ENCODE measurements at regions of chr7 and their contacts with region 1.

Region 1: GRCh38 chr7:38369816-38370493 is 96.5 kb upstream of the TARP start:
- DNase-seq: peak; percentile 66
- H3K4me3 Mint-ChIP-seq: no peak overlapping the region
- H3K27ac Mint-ChIP-seq: peak overlapping the region; percentile 61
- H3K4me1 Mint-ChIP-seq: peaks cover 38% of the 10 kb centered on the region
- H3K27me3 Mint-ChIP-seq: no peaks in the 10 kb centered on the region

Region 2: DNA sequence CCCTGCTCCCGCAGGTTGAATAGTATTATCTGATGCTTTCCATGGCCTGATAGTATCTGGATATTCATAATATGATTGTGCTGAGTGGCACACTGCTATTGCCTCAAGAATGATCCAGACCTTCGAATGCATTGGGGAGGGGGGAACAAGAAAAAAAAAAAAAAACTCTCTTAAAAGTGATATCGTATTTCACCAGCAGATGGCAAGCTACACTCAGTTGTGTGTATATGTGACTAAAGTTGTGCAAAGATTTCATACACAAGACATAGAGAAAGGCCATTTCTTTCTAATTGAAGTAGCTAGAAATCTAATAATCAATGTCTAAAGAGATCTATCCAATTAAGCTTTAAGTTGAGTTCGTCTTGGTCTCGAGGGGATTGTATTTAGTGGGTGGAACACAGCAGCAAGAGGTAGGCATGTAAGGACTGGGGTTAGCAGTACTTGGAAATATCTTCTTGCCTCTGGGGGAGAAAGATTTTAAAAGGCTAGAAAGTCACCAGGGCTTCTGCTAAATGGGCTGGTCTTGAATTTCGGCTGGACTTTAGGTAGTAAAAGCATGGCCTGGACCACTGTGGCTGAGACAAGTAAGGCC is 468.6 kb before region 1 on chr7:
- intact Hi-C with region 1: loop called (anchors 5 kb)
- DNase-seq: no peak
- H3K4me3 Mint-ChIP-seq: no peak overlapping the region
- H3K27ac Mint-ChIP-seq: no peak overlapping the region
- H3K4me1 Mint-ChIP-seq: no peaks in the 10 kb centered on the region
- H3K27me3 Mint-ChIP-seq: peaks cover 2% of the 10 kb centered on the region

Region 3: DNA sequence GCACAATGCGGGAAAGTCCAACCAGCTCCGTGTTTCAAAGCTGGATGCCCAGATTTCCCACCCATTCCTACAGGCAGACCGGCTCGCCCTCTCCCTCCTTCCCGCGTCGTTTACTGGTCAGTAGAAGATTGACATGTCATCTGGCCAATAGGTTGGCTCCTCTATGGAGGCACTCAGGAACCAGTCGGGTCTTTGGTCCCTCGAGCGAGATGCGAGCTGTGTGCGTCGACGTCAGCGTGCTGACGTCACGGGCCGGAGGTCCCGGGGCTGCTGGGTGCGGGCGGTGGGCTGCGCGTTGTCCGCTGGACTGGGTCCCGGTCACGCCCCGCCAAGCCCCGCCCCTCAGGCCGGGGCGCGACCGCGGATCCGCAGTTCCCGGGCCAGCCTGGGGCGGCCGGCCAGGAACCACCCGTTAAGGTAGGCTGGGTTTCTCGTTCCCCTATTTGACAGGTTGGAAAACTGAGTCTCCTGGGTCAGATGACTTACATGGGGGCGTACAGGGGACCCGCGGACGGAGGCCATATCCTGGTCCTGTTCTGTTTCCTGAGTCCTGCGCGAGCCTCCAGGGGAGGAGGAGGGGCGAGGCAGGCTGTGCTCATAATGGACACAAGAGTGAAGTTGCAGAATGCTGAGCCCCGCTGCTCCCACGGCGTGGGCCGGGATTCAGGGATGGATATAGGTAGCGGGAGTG is 191.8 kb before region 1 on chr7 and contains the start of gene STARD3NL:
- intact Hi-C with region 1: loop called (anchors 2 kb)
- DNase-seq: peak; percentile 87
- H3K4me3 Mint-ChIP-seq: peak within 1 kb of the TSS; percentile 95
- H3K27ac Mint-ChIP-seq: peak within 1 kb of the TSS; percentile 89
- H3K4me1 Mint-ChIP-seq: peaks cover 36% of the 10 kb centered on the region
- H3K27me3 Mint-ChIP-seq: no peaks in the 10 kb centered on the region
- total RNA-seq, gene STARD3NL: 39.2 and 42.4 TPM in 2 replicates

Region 4: DNA sequence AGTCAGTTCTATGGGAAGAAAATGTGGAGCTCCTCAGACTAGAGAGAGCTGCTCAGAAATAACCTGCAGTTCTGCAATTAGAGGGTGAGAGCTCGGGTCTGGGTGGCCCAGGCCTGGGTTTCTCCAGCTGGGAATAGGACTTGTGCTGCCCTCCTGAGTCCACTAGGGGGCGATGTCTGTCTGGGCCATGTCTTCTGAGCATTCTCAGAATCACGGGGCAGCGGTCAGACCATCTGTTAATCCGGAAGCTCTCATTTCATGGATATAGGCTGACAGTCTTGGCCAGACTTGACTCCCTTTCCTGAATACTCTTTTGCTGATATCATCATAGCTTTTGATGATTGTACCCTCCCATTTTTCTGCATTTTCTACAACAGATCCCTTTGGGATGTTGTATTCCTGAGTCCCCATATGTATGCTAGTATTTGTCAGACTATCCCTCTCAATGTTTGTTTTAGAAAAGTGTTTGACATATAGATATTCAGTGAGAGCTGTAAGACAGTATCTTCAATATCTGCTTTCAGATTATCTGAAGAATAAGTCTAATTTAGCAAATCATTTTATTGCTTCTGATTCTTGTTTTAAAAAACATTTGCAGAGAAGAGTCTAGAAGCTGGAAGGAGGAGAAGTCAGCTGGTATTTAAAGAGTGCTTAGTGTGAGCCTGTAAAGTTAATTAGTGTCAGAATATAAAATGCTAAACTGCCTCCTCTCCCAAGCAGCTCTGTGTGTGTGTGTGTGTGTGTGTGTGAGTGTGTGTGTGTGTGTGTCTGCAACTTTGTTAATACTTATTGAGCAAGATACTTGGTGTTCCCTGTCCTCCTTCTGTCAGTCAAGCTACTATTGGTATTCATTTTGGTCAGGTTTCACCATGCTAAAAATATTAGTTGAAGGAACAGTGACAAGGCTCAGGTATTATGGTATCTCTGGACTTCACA is 154.0 kb before region 1 on chr7:
- intact Hi-C with region 1: loop called (anchors 1 kb)
- DNase-seq: peak; percentile 70
- H3K4me3 Mint-ChIP-seq: no peak overlapping the region
- H3K27ac Mint-ChIP-seq: no peak overlapping the region
- H3K4me1 Mint-ChIP-seq: peaks cover 36% of the 10 kb centered on the region
- H3K27me3 Mint-ChIP-seq: no peaks in the 10 kb centered on the region

Region 5: GRCh38 chr7:38452681-38453108 is 82.7 kb after region 1 on chr7:
- intact Hi-C with region 1: no loop called
- DNase-seq: no peak
- H3K4me3 Mint-ChIP-seq: no peak overlapping the region
- H3K27ac Mint-ChIP-seq: no peak overlapping the region
- H3K4me1 Mint-ChIP-seq: peaks cover 10% of the 10 kb centered on the region
- H3K27me3 Mint-ChIP-seq: peaks cover 2% of the 10 kb centered on the region